Head of caudate nucleus (tissue), 42 donors: ENCODE measurements at regions of chr14 and their contacts with region 1.

Region 1: GRCh38 chr14:23446291-23446851 is 10.9 kb upstream of the MYH7 start:
- DNase-seq: peak in 31 of 42 donors; percentile 14 to 76 (median 49)

Region 2: DNA sequence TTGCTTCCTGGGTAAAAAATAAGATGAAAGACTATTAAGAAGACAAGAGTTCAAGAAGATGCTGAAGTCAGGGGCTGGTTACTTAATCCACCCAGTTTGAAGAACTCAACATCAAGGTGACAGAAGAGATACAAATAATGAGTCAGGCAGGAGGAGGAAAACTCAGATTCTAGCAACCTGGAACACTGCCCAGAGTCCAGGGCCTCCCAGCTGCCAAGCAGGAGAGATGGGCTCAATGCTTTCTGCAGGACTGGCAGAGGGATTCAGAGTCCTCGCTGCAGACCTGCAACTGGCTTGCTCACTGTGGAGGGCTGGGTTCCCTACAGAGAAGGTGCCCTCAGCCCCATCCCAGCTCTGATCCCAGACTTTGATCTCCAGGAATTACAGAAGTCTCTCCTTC is 298.7 kb before region 1 on chr14:
- intact Hi-C with region 1: no loop called
- DNase-seq: peak in 26 of 42 donors; percentile 12 to 78 (median 44)

Region 3: DNA sequence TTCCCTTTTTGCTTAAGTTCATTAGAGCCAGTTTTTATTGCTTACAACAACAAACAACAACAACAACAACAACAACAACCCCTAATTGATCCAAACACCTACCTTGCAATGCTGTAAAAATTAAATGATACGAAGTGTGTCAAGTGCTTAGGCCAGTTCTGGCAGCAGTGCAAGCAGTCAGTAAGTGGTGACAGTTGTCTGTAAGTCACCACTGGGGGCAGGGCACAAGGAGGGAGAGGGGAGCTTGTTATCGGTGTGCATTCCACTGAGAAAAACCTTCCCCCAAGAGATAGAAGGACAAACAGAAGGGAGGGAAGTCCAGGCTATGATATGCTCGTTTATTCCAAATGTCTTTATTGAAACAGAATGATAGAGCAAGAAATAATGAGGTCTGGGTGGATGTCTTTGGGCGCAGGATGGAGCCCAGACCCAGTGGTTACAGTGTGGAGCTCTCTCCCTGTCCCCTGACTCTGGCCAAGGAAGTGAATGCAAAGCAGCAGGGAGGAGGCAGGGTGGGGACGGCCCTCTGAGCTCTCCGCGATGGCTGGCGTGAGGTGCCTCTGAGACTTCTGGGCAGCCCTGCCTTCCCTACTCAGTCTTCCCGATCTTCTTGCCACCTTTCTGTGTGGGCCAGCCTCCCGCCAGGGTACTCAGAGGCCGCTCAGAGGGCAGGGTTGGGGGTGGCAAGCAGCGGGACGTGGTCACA is 100.2 kb before region 1 on chr14:
- intact Hi-C with region 1: loop called (anchors 10 kb)
- DNase-seq: peak in 3 of 42 donors; percentile 16 to 44 (median 25)

Region 4: GRCh38 chr14:23895480-23895879 is 449.1 kb after region 1 on chr14:
- intact Hi-C with region 1: no loop called
- DNase-seq: peak in 3 of 42 donors; percentile 6 to 26 (median 10)